Naive thymus-derived CD4-positive, alpha-beta T cell (primary cell): ENCODE measurements at regions of chr18 and their contacts with region 1.

Region 1: DNA sequence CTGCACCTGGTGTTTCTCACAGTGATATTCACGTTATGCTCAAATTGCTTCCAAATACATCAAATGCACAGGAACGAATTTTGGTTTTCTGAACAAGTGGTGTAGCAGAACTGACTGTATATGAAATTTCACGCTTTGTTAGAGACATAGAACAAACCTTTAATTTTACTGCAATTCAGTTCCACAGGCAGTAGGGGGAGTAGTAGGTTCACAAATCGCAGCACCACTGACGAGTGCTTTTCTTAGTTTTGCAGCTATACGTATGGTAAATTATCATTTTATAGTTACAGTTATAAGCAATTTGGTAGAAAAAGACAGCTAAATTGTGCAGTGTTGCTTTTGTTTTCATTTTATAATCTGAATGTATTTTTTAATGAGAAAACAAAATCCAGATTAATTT is 113.3 kb downstream of the KIAA1328 start:
- DNase-seq: peak in 4 of 9 donors; percentile 4 to 23 (median 10)
- ATAC-seq: no peak
- H3K4me3 ChIP-seq: no peak overlapping the region
- H3K4me3 Mint-ChIP-seq: no peak overlapping the region
- H3K27ac ChIP-seq: no peak overlapping the region
- H3K27ac Mint-ChIP-seq: no peak overlapping the region
- H3K4me1 ChIP-seq: no peaks in the 10 kb centered on the region
- H3K4me1 Mint-ChIP-seq: peaks cover 0 to 5% (median 0%) of the 10 kb centered on the region in 7 donors
- H3K27me3 ChIP-seq: no peaks in the 10 kb centered on the region
- H3K27me3 Mint-ChIP-seq: no peaks in the 10 kb centered on the region

Region 2: GRCh38 chr18:37341016-37341415 is 398.8 kb after region 1 on chr18:
- CTCF ChIA-PET with region 1: no interaction called
- POLR2A ChIA-PET with region 1: no interaction called
- intact Hi-C with region 1: loop called in 1 of 2 experiments (anchors 5 kb)
- DNase-seq: no peak
- ATAC-seq: no peak
- H3K4me3 ChIP-seq: no peak overlapping the region
- H3K4me3 Mint-ChIP-seq: no peak overlapping the region
- H3K27ac ChIP-seq: no peak overlapping the region
- H3K27ac Mint-ChIP-seq: no peak overlapping the region
- H3K4me1 ChIP-seq: no peaks in the 10 kb centered on the region
- H3K4me1 Mint-ChIP-seq: peaks cover 0 to 2% (median 0%) of the 10 kb centered on the region in 7 donors
- H3K27me3 ChIP-seq: no peaks in the 10 kb centered on the region
- H3K27me3 Mint-ChIP-seq: peaks cover 0 to 17% (median 11%) of the 10 kb centered on the region in 5 donors